K562 (cell line): ENCODE measurements at regions of chr1 and their contacts with region 1.

Region 1: GRCh38 chr1:117605774-117606648 is at the start of gene TENT5C:
- DNase-seq: peak; percentile 100
- ATAC-seq: peak; percentile 89
- H3K4me3 ChIP-seq: peak within 1 kb of the TSS; percentile 70
- H3K27ac ChIP-seq: peak within 1 kb of the TSS; percentile 58
- H3K4me1 ChIP-seq: peaks cover 40 to 44% of the 10 kb centered on the region in 2 experiments
- H3K27me3 ChIP-seq: no peaks in the 10 kb centered on the region
- CTCF ChIP-seq: peak in 2 of 3 experiments; percentile 18 to 33; a peak in 2 of 6 replicates
- EP300 ChIP-seq: no peak
- POLR2A ChIP-seq: peak; percentile 97
- RAD21 ChIP-seq: peak in 1 of 2 experiments; percentile 6; a peak in 2 of 4 replicates
- polyA plus RNA-seq, gene TENT5C: 3.8 to 5.0 TPM

Region 2: DNA sequence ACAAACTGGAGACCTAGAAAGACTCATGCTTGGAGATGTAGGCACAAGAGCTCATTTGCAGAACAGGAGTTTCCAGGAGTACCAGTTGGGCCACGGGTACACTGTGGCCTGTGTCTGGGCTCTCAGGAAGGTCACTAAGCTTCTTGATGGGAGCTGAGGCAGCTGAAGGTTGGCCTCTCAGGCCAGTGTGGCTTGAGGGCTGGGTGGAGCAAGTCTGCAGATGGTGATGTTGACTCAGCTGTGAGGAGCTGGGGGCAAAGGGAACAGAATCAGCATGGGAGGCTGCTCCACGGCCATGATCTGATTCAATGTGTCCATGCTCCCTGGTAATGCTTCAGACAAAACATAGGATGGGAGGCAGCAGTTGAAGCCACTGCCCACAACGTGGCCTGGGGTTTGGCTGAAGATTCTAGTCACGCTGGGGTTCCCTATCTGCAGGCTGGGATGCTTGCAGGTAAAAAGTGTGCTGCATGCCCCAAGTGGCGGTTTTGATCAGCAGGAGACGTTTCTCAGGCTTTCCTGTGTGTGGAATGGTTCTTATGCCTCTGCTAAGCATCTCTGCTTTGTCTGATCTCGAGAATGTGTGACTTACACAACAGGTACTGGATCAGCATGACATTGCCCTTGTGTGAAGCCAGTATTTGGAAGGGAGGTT is 15.6 kb before region 1 on chr1:
- CTCF ChIA-PET with region 1: no interaction called
- POLR2A ChIA-PET with region 1: interaction called, 18 read pairs
- in situ Hi-C with region 1: no loop called
- intact Hi-C with region 1: no loop called
- DNase-seq: no peak
- ATAC-seq: peak; percentile 39
- H3K4me3 ChIP-seq: no peak overlapping the region
- H3K27ac ChIP-seq: no peak overlapping the region
- H3K4me1 ChIP-seq: peaks cover 6 to 8% of the 10 kb centered on the region in 2 experiments; a peak in 3 of 5 replicates
- H3K27me3 ChIP-seq: no peaks in the 10 kb centered on the region
- CTCF ChIP-seq: peak in 2 of 3 experiments; percentile 26 to 42; a peak in 3 of 6 replicates
- EP300 ChIP-seq: no peak
- POLR2A ChIP-seq: no peak
- RAD21 ChIP-seq: peak in 1 of 2 experiments; percentile 31; a peak in 1 of 4 replicates

Region 3: DNA sequence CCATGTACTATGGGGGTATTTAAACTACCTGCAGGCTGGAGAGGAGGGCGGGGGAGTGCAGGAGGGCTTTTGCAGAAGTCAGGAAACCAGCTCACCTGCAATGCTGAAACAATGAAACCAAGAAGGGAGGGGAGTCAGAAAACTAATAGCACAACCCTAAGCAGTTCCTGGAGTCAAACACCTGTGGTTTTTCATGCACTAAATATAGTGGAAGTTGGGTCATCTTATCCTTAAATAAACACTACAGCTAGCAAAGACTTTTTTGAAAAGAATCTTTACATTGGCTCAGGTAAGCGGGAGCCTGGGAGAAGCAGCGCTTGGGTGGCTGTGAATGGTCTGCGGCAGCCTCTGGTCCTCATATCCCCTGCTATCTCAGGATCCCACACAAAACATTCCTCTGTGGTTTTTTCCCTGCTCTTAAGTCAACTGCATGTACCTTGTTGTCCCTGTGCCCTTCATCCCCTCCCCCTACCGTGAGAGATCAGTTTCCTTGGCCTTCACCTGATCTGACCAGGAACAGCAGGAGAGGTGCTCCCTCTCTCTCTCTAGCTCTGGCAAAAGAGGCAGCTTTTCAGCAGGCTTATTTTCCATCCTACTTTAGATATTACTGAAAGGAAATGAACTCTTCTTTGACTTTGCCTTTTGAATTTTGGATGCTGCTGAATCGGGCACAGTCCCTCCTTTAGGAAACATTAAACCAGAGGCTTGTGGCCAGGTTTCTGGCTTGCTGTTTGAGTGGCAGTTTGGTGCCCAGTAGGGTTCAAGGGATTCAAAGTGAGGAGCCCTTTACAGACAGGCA is 26.5 kb after region 1 on chr1:
- CTCF ChIA-PET with region 1: no interaction called
- POLR2A ChIA-PET with region 1: interaction called, 383 read pairs
- in situ Hi-C with region 1: no loop called
- intact Hi-C with region 1: no loop called
- DNase-seq: no peak
- ATAC-seq: no peak
- H3K4me3 ChIP-seq: no peak overlapping the region
- H3K27ac ChIP-seq: no peak overlapping the region
- H3K4me1 ChIP-seq: peaks cover 9 to 21% of the 10 kb centered on the region in 2 experiments
- H3K27me3 ChIP-seq: no peaks in the 10 kb centered on the region
- CTCF ChIP-seq: no peak
- EP300 ChIP-seq: no peak
- POLR2A ChIP-seq: no peak
- RAD21 ChIP-seq: no peak

Region 4: GRCh38 chr1:117644696-117645311 is 38.8 kb after region 1 on chr1:
- CTCF ChIA-PET with region 1: no interaction called
- POLR2A ChIA-PET with region 1: interaction called, 27 read pairs
- in situ Hi-C with region 1: no loop called
- intact Hi-C with region 1: no loop called
- DNase-seq: peak; percentile 86 to 92 (median 88)
- ATAC-seq: peak; percentile 94
- H3K4me3 ChIP-seq: no peak overlapping the region
- H3K27ac ChIP-seq: peak overlapping the region; percentile 24; the same call in 1 of the 3 replicates
- H3K4me1 ChIP-seq: peaks cover 32 to 39% of the 10 kb centered on the region in 2 experiments
- H3K27me3 ChIP-seq: no peaks in the 10 kb centered on the region
- CTCF ChIP-seq: peak in 2 of 3 experiments; percentile 11 to 23; a peak in 3 of 6 replicates
- EP300 ChIP-seq: peak; percentile 86
- POLR2A ChIP-seq: no peak
- RAD21 ChIP-seq: peak in 1 of 2 experiments; percentile 44; a peak in 2 of 4 replicates

Region 5: DNA sequence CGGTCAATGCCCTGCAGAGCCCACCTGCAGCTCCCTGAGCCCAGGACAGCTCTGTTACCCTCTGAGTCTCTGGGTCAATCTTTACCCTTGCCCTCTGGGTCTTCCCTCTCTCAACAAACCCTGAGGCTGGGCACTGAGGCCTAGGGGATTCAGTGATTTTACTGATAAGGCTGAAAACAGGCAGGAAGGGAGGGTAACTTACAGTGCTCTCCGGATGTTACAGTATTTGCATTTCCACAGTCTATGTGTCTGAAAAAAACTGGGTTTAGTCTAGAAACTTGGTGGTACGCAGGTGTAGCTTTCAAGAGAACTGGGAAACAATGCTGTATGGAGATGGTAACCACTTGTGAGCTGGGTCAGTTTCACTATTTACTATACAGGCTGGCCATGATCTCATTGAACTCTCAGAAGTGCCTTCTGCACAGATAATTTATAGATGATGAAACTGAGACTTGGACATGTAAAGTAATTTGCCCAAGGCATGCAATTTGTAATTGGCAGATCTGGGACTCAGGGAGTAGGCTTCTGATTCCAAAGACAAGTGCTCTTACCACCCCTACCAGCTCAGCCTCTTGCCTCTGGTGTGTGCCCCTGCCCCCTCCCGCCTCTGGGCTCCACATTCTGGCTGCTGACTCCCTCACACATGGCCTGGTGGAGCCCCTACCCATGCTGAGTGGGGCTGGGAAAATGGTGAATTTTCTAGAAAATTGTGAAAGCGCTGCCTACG is 48.6 kb after region 1 on chr1:
- CTCF ChIA-PET with region 1: no interaction called
- POLR2A ChIA-PET with region 1: interaction called, 28 read pairs
- in situ Hi-C with region 1: no loop called
- intact Hi-C with region 1: no loop called
- DNase-seq: no peak
- ATAC-seq: peak; percentile 12
- H3K4me3 ChIP-seq: no peak overlapping the region
- H3K27ac ChIP-seq: peak overlapping the region; percentile 4; the same call in 1 of the 3 replicates
- H3K4me1 ChIP-seq: peaks cover 46 to 63% of the 10 kb centered on the region in 2 experiments
- H3K27me3 ChIP-seq: no peaks in the 10 kb centered on the region
- CTCF ChIP-seq: no peak
- EP300 ChIP-seq: no peak
- POLR2A ChIP-seq: no peak
- RAD21 ChIP-seq: no peak

Region 6: GRCh38 chr1:118151312-118151937 is 545.4 kb after region 1 on chr1:
- CTCF ChIA-PET with region 1: no interaction called
- POLR2A ChIA-PET with region 1: no interaction called
- in situ Hi-C with region 1: no loop called
- intact Hi-C with region 1: no loop called
- DNase-seq: peak; percentile 32 to 78 (median 34)
- ATAC-seq: peak; percentile 76
- H3K4me3 ChIP-seq: no peak overlapping the region
- H3K27ac ChIP-seq: no peak overlapping the region
- H3K4me1 ChIP-seq: no peaks in the 10 kb centered on the region
- H3K27me3 ChIP-seq: no peaks in the 10 kb centered on the region
- CTCF ChIP-seq: peak; percentile 68 to 87 (median 81); a peak in 5 of 6 replicates
- EP300 ChIP-seq: no peak
- POLR2A ChIP-seq: no peak
- RAD21 ChIP-seq: peak; percentile 89 to 96